ENCODE measurements at regions of chr12 and their contacts with region 1.

Region 1: DNA sequence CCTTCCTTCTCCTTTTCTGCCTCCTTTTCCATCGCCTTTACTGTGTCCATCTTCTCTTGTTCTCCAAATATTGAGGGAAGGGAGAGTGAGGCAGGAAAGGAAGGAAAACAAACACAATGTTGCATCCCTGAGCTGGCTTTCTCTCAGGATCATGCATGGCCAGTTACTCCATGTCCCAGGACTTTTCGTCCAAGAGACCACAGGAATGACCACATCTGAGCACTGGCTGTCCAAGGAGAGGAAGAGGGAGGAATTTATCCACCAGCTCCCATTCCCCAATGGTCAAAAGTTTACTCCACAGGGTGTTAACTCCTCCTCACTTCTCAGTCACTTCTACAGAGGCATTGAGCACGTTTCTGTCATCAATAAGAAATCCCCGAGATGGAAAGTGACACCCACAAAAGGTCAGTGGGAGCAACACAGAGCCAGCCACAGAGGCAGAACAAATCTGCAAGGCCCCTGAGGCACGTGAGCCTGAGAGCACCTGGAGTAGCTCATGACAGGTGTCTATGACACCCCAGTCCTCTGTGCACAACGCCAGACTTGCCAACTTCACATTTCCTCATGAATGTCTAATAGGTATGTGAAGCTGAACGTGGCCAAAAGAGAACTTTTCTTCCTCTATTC is 177.3 kb upstream of the NUDT4 start:
- DNase-seq: no peak
- H3K4me3 ChIP-seq: no peak overlapping the region
- H3K27ac ChIP-seq: no peak overlapping the region
- H3K4me1 ChIP-seq: peaks cover 40% of the 10 kb centered on the region
- H3K27me3 ChIP-seq: no peaks in the 10 kb centered on the region
- CTCF ChIP-seq: no peak

Region 2: GRCh38 chr12:93060666-93061471 is 139.5 kb before region 1 on chr12:
- CTCF ChIA-PET with region 1: no interaction called
- POLR2A ChIA-PET with region 1: no interaction called
- intact Hi-C with region 1: no loop called
- DNase-seq: peak; percentile 76
- H3K4me3 ChIP-seq: peak overlapping the region; percentile 0
- H3K27ac ChIP-seq: peak overlapping the region; percentile 10
- H3K4me1 ChIP-seq: peaks cover 19% of the 10 kb centered on the region
- H3K27me3 ChIP-seq: no peaks in the 10 kb centered on the region
- CTCF ChIP-seq: no peak; the same call in 1 of the 2 replicates

Region 3: GRCh38 chr12:93347054-93347776 is 146.8 kb after region 1 on chr12:
- CTCF ChIA-PET with region 1: no interaction called
- POLR2A ChIA-PET with region 1: no interaction called
- intact Hi-C with region 1: no loop called
- DNase-seq: peak; percentile 24
- H3K4me3 ChIP-seq: no peak overlapping the region
- H3K27ac ChIP-seq: no peak overlapping the region
- H3K4me1 ChIP-seq: peaks cover 7% of the 10 kb centered on the region
- H3K27me3 ChIP-seq: no peaks in the 10 kb centered on the region
- CTCF ChIP-seq: no peak

Region 4: DNA sequence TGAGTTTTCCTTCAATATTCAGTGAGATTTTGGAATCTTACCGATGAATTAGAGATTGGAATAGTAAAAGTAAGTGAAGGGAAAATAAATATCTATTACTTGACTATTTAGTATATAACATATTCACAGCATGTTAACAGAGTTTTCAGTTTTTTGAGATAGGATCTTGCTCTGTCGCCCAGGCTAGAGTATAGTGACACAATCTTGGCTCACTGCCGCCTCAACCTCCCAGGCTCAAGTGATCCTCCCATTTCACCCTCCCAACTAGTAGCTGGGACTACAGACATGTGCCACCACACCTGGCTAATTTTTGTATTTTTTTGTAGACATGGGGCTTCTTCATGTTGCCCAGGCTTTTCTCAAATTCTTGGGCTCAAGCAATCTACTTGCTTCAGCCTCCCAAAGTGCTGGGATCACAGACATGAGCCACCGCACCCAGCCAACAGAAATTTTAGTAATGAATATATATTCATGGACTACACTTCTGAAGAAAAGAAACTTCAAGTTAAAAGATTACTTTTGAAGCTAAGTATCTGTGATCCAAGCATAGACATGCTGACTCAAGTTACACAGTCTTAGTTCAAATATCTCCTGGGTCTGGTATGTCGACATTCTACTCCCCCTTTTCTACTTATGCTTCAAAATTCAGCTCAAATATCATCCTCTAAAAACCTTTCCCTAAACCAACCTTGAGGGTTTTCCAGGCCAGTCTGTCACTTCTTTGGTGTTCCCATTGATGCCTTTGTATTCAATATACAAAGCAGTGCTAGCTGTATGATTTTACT is 227.6 kb after region 1 on chr12:
- CTCF ChIA-PET with region 1: no interaction called
- POLR2A ChIA-PET with region 1: no interaction called
- intact Hi-C with region 1: no loop called
- DNase-seq: no peak
- H3K4me3 ChIP-seq: no peak overlapping the region
- H3K27ac ChIP-seq: no peak overlapping the region
- H3K4me1 ChIP-seq: peaks cover 44% of the 10 kb centered on the region
- H3K27me3 ChIP-seq: no peaks in the 10 kb centered on the region
- CTCF ChIP-seq: no peak

Region 5: DNA sequence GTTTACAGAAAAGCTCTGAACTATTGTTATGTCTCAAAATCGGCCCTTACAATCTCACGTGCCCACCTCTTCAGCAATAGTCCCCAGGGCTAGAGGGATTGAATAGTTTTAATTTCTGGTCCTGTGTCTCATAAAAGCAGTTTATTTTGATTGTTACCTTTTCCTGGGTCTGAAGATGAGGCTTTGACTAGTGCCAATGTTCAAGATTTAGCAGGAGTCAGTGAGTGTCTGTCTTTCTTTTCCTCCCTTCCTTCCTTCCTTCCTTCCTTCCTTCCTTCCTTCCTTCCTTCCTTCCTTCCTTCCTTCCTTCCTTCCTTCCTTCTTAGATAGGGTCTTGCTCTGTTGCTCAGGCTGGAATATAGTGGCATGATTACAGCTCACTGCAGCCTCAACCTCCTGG is 347.4 kb after region 1 on chr12:
- CTCF ChIA-PET with region 1: no interaction called
- POLR2A ChIA-PET with region 1: no interaction called
- intact Hi-C with region 1: loop called (anchors 2 kb)
- DNase-seq: peak; percentile 79
- H3K4me3 ChIP-seq: no peak overlapping the region
- H3K27ac ChIP-seq: peak overlapping the region; percentile 60
- H3K4me1 ChIP-seq: peaks cover 8% of the 10 kb centered on the region
- H3K27me3 ChIP-seq: no peaks in the 10 kb centered on the region
- CTCF ChIP-seq: no peak

Region 6: DNA sequence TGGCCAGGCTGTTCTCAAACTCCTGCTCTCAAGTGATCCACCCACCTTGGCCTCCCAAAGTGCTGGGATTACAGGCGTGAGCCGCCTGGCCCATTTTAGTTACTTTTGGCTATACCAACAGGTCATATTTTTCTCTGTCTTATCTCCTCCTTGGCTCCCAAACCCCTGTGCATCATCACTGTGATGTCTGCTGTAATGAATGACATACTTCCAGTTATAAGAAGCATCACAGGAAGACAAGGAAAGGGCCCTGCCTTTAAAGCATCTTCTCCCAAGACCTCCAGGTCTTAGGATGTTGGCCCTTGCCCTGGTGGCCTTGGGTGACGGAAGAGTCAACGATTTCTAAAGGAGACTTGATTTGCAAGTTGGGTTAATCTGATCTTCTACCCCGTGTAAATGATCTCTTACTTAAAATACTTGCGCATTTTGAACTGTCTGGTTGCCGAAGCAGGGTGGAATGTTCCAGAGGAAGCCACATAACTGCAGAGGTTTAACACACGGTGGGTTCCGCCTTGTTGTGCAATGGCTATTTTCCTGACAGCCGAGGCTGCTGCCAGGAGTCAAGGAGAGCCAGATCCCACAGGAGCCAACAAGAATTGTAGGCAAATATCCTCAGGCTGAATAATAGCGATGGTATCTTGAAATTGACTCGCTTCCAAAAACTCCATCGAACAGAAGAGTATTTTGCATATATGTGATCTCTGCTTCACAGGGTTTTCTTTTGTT is 892.3 kb after region 1 on chr12:
- CTCF ChIA-PET with region 1: no interaction called
- POLR2A ChIA-PET with region 1: no interaction called
- intact Hi-C with region 1: no loop called
- DNase-seq: no peak
- H3K4me3 ChIP-seq: no peak overlapping the region
- H3K27ac ChIP-seq: no peak overlapping the region
- H3K4me1 ChIP-seq: no peaks in the 10 kb centered on the region
- H3K27me3 ChIP-seq: no peaks in the 10 kb centered on the region
- CTCF ChIP-seq: no peak